ENCODE measurements at regions of chr5 and their contacts with region 1.

Region 1: GRCh38 chr5:141618804-141619554 is at the start of gene DIAPH1:
- DNase-seq: peak; percentile 93
- ATAC-seq: peak; percentile 94
- H3K4me3 ChIP-seq: peak within 1 kb of the TSS; percentile 68 to 85
- H3K27ac ChIP-seq: peak within 1 kb of the TSS; percentile 87
- H3K4me1 ChIP-seq: peaks cover 6 to 25% of the 10 kb centered on the region in 2 experiments
- H3K27me3 ChIP-seq: no peaks in the 10 kb centered on the region
- CTCF ChIP-seq: peak; percentile 95 to 99 (median 96)
- POLR2A ChIP-seq: peak; percentile 64
- RAD21 ChIP-seq: peak; percentile 80
- total RNA-seq, gene DIAPH1: 142 TPM

Region 2: DNA sequence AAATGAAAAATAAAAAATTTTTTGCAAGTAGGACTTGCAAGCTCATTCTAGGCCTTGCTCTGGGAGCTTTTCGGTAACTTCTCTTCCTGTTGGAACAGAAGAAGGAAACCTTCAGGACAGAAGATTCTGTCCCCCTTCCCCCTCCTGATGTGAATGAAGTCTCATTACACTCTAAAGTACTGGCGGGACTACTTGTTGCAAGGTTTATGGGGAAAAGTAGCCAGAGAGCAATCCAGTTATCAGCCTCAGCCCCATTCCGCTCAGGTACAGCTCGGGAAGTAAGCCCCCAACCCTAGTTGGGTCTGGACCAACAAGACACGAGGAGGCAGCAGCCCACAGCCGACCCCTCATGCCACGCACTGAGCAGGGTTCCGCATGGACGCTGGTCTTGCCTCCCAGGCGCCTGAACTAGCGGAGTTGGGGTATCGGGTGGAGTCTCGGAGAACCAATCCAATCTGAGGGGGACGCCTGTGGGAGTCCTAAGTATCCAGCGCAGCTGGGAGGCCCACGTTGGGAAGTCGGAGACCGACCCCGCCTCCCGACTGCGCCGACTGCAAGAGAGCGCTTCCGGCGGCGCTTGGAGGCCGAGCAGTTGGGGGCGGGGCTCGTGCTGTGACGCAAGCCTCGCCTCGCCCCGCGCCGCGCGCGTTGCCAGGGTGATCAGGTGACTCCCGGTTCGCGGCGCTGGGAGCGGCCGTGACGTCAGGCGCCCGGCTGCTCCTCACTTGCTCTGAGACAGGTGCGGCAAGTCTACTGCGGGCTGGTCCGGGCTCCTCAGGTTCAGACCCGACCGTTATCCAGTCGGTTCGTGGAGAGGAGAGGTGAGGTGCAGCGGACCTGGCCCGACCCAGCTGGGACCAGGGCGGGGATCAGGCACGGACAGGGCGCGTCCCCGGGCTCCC is 1444.3 kb before region 1 on chr5 and contains the start of gene CYSTM1:
- CTCF ChIA-PET with region 1: no interaction called
- POLR2A ChIA-PET with region 1: no interaction called
- RAD21 ChIA-PET with region 1: no interaction called
- intact Hi-C with region 1: loop called (anchors 5 kb)
- DNase-seq: peak; percentile 94
- ATAC-seq: peak; percentile 91
- H3K4me3 ChIP-seq: peak within 1 kb of the TSS; percentile 88 to 95
- H3K27ac ChIP-seq: peak within 1 kb of the TSS; percentile 93
- H3K4me1 ChIP-seq: peaks cover 15 to 29% of the 10 kb centered on the region in 2 experiments
- H3K27me3 ChIP-seq: no peaks in the 10 kb centered on the region
- CTCF ChIP-seq: no peak
- POLR2A ChIP-seq: peak; percentile 87
- RAD21 ChIP-seq: 0 out of 2 replicates have a peak, but pooled peaks have one; percentile 28
- total RNA-seq, gene CYSTM1: 56.0 TPM

Region 3: DNA sequence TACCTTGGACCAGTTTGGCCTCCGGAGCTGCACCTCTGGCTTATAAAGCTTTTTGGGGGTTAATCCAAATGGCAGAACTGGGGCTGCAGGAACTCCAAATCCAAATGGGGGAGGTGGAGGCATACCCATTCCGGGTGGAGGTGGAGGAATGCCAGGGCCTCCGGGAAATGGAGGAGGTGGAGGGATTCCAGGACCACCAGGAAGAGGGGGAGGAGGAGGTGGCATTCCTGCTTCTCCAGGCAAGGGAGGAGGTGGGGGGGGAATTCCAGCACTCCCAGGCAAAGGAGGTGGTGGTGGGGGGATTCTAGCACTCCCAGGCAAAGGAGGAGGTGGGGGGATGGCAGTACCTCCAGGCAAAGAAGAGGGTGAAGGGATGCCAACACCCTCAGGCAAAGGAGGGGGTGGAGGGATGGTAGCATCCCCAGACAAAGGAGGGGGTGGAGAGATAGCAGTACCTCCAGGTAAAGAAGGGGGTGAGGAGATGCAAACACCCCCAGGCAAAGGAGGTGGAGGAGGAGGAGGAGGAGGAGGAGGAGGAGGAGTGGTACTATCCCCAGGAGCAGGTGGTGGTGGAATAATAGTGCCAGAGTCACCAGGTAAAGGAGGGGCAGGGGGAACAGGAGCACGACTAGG is 45.4 kb before region 1 on chr5:
- CTCF ChIA-PET with region 1: no interaction called
- POLR2A ChIA-PET with region 1: no interaction called
- RAD21 ChIA-PET with region 1: no interaction called
- intact Hi-C with region 1: no loop called
- DNase-seq: no peak
- ATAC-seq: no peak
- H3K4me3 ChIP-seq: no peak overlapping the region
- H3K27ac ChIP-seq: no peak overlapping the region
- H3K4me1 ChIP-seq: no peaks in the 10 kb centered on the region
- H3K27me3 ChIP-seq: no peaks in the 10 kb centered on the region
- CTCF ChIP-seq: no peak
- POLR2A ChIP-seq: no peak
- RAD21 ChIP-seq: no peak

Region 4: GRCh38 chr5:141598391-141599350 is 20.3 kb before region 1 on chr5:
- CTCF ChIA-PET with region 1: interaction called, 72 read pairs
- POLR2A ChIA-PET with region 1: interaction called, 3 read pairs
- RAD21 ChIA-PET with region 1: no interaction called
- intact Hi-C with region 1: no loop called
- DNase-seq: no peak
- ATAC-seq: no peak
- H3K4me3 ChIP-seq: no peak overlapping the region
- H3K27ac ChIP-seq: no peak overlapping the region
- H3K4me1 ChIP-seq: peaks cover 0 to 6% of the 10 kb centered on the region in 2 experiments; a peak in 1 of 4 replicates
- H3K27me3 ChIP-seq: no peaks in the 10 kb centered on the region
- CTCF ChIP-seq: no peak
- POLR2A ChIP-seq: no peak
- RAD21 ChIP-seq: no peak

Region 5: GRCh38 chr5:141636413-141637122 is 17.6 kb after region 1 on chr5 and contains the starts of genes HDAC3 and RELL2:
- CTCF ChIA-PET with region 1: interaction called, 35 read pairs
- POLR2A ChIA-PET with region 1: interaction called, 14 read pairs
- RAD21 ChIA-PET with region 1: interaction called, 3 to 4 read pairs
- intact Hi-C with region 1: loop called (anchors 1 kb)
- DNase-seq: peak; percentile 68
- ATAC-seq: peak; percentile 82
- H3K4me3 ChIP-seq: peak within 1 kb of the TSS; percentile 78 to 96
- H3K27ac ChIP-seq: peak within 1 kb of the TSS; percentile 62
- H3K4me1 ChIP-seq: peaks cover 6 to 30% of the 10 kb centered on the region in 2 experiments
- H3K27me3 ChIP-seq: no peaks in the 10 kb centered on the region
- CTCF ChIP-seq: no peak
- POLR2A ChIP-seq: peak; percentile 67
- RAD21 ChIP-seq: no peak
- total RNA-seq, gene HDAC3: 91.9 TPM
- total RNA-seq, gene RELL2: 8.7 TPM

Region 6: DNA sequence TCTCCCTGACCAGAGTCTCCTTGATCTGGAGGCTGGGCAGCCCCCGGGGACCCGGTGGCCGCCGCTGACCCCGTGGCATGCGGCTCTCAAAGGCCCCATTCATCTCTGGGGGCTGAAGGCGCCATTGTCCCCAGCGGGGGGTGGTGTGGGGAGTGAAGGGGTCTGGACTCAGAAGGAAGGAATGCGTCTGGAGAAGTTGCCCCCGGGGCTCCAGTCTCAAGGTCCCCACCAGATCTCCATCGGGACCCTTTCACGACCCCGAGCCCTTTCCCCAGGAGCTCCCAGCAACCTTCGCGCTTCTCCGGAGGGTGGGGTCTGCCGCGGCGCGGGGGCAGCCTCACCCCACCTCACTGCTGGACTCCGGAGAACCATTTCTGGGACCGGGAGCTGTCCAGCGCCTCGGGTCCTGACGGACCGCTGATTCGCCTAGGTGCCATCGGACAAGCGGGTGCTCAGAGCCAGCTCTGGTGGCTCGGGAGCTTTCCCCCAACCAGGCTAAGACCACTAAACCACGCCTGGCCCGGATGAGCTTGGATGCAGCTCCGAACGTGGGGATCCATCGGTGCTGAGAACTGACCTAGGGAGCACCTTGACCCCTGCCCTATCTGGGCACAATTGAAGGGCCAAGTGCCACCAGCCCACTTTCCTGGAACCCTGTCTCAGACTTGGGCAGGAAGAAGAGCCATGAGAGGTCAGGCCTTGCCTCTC is 264.4 kb after region 1 on chr5:
- CTCF ChIA-PET with region 1: no interaction called
- POLR2A ChIA-PET with region 1: no interaction called
- RAD21 ChIA-PET with region 1: no interaction called
- intact Hi-C with region 1: no loop called
- DNase-seq: no peak
- ATAC-seq: no peak
- H3K4me3 ChIP-seq: no peak overlapping the region
- H3K27ac ChIP-seq: no peak overlapping the region
- H3K4me1 ChIP-seq: peaks cover 3 to 12% of the 10 kb centered on the region in 2 experiments; a peak in 3 of 4 replicates
- H3K27me3 ChIP-seq: peaks cover 4% of the 10 kb centered on the region; the same call in 1 of the 2 replicates
- CTCF ChIP-seq: no peak
- POLR2A ChIP-seq: no peak
- RAD21 ChIP-seq: no peak

Measured in HCT116 (cell line).